MCF 10A (cell line): ENCODE measurements at regions of chr20 and their contacts with region 1.

Region 1: DNA sequence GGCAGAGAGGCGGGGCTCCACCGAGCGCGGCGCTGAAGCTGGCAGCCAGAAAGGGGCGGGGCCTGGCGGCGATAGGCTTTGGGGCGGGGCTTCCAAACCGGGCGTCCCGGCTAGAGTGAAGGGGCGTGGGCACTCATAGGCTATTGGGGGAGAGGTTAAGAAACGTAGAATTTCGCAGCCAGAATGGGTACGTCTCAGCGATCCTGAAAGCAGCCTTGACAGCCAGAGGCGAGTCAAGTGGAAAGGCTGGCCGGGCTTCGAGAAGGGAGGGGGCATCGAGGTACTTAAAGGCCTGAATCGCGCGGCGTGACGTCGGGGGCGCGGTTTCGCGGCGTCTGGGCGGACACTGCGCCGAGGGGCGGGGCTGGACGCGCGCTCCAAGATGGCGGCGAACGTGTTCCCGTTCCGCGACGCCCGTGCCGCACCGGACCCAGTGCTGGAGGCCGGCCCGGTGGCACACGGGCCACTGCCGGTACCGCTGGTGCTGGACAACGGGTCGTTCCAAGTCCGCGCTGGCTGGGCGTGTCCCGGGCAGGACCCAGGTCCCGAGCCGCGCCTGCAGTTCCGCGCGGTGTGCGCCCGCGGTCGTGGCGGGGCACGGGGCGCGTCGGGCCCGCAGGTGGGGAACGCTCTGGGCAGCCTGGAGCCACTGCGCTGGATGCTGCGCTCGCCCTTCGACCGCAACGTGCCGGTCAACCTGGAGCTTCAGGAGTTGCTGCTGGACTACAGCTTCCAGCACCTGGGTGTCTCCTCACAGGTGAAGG is at the start of gene ACTR5:
- DNase-seq: peak; percentile 83
- H3K4me3 Mint-ChIP-seq: peak within 1 kb of the TSS; percentile 93
- H3K27ac Mint-ChIP-seq: peak within 1 kb of the TSS; percentile 95
- H3K4me1 Mint-ChIP-seq: peaks cover 18% of the 10 kb centered on the region
- H3K27me3 Mint-ChIP-seq: no peaks in the 10 kb centered on the region
- CTCF ChIP-seq: no peak
- total RNA-seq, gene ACTR5: 6.0 and 6.9 TPM in 2 replicates

Region 2: DNA sequence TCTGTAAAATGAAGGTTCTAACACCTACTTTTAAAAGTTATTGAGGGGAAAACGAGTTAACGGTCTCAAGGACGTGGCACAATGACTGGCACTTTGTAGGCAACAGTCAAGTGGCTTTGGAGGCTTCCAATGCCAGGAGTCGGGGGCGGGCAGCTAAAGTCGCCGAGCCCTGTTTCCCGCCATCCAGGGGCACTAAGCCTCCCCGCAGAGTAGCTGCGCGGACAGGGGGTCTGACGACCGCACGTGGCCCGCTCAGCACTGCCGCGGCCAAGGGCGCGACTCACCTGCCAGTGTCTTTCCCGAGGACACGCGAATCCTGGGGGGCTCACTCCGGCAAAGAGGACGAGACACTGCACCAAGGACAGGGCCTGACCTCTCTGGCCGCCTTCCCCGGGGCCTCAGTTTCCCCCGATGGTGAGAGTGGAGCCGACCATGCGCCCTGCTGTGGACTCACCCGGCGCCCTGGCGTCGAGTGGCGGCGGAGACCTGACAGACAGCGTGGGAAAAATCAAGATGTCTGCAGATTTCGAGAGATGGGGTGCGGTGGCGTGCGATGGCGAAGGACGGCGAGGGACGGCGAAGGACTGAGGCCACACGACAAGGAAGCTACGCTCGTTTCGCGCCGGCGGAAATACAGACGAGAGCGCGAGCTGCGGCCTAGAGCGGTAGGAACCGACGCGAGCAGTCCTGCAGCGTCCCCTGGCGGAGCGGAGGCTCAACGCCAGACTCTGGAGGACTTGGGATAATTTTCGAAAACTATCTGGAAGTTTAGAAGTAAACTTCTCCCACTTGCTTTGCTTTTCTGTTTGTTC is 313.3 kb before region 1 on chr20 and contains the start of gene SNHG17:
- CTCF ChIA-PET with region 1: interaction called, 10 read pairs
- POLR2A ChIA-PET with region 1: interaction called, 5 read pairs
- intact Hi-C with region 1: no loop called
- DNase-seq: peak; percentile 88
- H3K4me3 Mint-ChIP-seq: peak within 1 kb of the TSS; percentile 90
- H3K27ac Mint-ChIP-seq: peak within 1 kb of the TSS; percentile 92
- H3K4me1 Mint-ChIP-seq: peaks cover 22% of the 10 kb centered on the region
- H3K27me3 Mint-ChIP-seq: no peaks in the 10 kb centered on the region
- CTCF ChIP-seq: peak; percentile 99
- total RNA-seq, gene SNHG17: 83.6 and 133 TPM in 2 replicates

Region 3: GRCh38 chr20:38658879-38659596 is 89.2 kb before region 1 on chr20:
- CTCF ChIA-PET with region 1: interaction called, 83 read pairs
- POLR2A ChIA-PET with region 1: interaction called, 4 read pairs
- intact Hi-C with region 1: no loop called
- DNase-seq: peak; percentile 46
- H3K4me3 Mint-ChIP-seq: no peak overlapping the region
- H3K27ac Mint-ChIP-seq: no peak overlapping the region
- H3K4me1 Mint-ChIP-seq: no peaks in the 10 kb centered on the region
- H3K27me3 Mint-ChIP-seq: peaks cover 77% of the 10 kb centered on the region
- CTCF ChIP-seq: peak; percentile 71

Region 4: GRCh38 chr20:38764567-38765355 is 16.5 kb after region 1 on chr20:
- CTCF ChIA-PET with region 1: interaction called, 145 read pairs
- POLR2A ChIA-PET with region 1: interaction called, 36 read pairs
- intact Hi-C with region 1: no loop called
- DNase-seq: peak; percentile 87
- H3K4me3 Mint-ChIP-seq: no peak overlapping the region
- H3K27ac Mint-ChIP-seq: no peak overlapping the region
- H3K4me1 Mint-ChIP-seq: peaks cover 16% of the 10 kb centered on the region
- H3K27me3 Mint-ChIP-seq: no peaks in the 10 kb centered on the region
- CTCF ChIP-seq: no peak

Region 5: DNA sequence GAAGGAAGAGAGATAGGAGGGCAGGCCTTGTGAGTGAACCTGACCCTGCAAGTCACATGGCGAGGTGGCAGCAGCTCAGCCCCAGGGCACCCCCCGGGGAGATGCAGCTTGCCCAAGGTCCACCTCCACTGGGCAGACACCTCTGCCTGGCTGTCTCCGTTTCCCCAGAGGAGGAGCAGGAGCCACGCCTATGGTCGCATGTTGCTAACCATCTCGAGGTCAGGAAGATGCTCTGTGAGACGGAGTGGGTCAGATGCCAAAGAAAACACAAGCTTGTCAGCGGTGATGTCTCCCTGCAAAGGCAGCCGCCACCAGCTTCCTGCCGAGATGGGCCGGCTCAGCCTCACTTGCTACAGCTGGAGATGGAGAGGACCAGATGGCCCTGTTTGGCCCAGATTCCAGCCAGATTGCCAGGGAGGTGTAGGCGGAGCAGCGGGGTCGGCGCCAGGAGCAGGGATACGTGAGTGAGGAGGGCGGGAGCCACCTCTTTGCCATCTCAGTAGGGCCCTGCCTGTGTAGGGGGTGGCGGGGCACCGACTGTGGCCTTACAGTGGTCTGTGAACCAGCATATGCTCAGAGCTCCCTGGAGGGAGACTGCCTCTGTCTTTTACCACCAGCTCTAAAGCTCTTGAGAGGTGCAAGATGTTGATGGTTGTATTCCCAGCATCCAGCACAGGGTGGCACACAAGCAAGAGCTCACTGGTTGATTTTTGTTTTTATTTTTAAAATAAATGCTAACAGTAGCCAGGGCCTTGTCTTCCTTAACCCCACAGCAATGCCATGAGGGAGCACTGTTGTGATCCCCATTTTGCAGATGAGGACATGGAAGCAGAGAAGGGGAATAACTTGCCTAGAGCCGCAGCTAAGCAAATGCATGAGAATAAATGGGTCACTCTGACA is 135.1 kb after region 1 on chr20:
- CTCF ChIA-PET with region 1: interaction called, 19 read pairs
- POLR2A ChIA-PET with region 1: interaction called, 4 read pairs
- intact Hi-C with region 1: no loop called
- DNase-seq: peak; percentile 43
- H3K4me3 Mint-ChIP-seq: no peak overlapping the region
- H3K27ac Mint-ChIP-seq: no peak overlapping the region
- H3K4me1 Mint-ChIP-seq: peaks cover 10% of the 10 kb centered on the region
- H3K27me3 Mint-ChIP-seq: no peaks in the 10 kb centered on the region
- CTCF ChIP-seq: no peak